ENCODE measurements at regions of chr18 and their contacts with region 1.

Region 1: GRCh38 chr18:7566567-7567473 is at the start of gene PTPRM:
- ATAC-seq: peak; percentile 79 to 91 (median 88)
- H3K4me3 ChIP-seq: peak within 1 kb of the TSS; percentile 49 to 77 (median 71)
- H3K27ac ChIP-seq: no peak within 1 kb of the TSS
- H3K4me1 ChIP-seq: peaks cover 2 to 7% of the 10 kb centered on the region in 2 donors
- total RNA-seq, gene PTPRM: 12.9 to 106 (median 66.9) TPM

Region 2: DNA sequence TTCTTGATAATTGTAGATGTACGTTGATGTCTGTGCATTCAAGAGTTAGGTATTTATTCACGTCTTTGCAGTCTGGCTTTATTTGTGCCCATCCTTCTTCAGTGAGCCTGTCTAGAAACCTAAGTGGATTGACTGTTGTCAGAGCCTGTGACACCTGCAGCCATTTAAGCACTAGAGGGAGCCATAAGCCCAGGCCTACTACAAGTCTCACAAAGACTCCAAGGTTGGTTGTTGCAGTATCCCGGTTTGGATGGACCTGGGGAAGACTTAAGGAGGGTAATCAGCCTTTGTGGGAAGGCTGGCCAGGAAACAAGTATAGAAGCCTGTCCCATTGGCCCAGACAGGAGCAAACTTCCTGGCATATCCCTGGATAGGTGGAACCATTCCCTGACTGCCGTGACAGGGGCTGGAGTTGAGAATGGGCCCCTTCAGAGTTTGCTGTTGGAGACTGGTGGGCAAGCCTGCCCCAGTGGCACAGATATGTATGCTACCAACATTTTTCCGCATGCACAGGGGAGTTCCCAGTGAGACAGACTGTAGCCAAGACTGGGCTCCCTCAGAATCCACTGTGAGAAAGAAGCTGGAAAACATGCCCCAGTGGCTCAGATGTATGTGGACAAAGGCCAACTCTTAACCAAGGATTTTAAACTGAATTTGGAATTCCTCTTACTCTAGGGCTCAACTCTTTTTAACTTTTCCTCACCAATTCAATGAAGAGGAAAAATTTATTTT is 345.2 kb before region 1 on chr18:
- in situ Hi-C with region 1: loop called in 1 of 9 experiments (anchors 25 kb)
- ATAC-seq: peak; percentile 78 to 100 (median 91)
- H3K4me3 ChIP-seq: no peak overlapping the region
- H3K27ac ChIP-seq: no peak overlapping the region
- H3K4me1 ChIP-seq: peaks cover 0 to 10% of the 10 kb centered on the region in 2 donors

Region 3: GRCh38 chr18:7259475-7260081 is 307.2 kb before region 1 on chr18:
- in situ Hi-C with region 1: loop called in 1 of 9 experiments (anchors 10 kb)
- ATAC-seq: peak in 1 of 8 experiments; percentile 23
- H3K4me3 ChIP-seq: no peak overlapping the region
- H3K27ac ChIP-seq: no peak overlapping the region
- H3K4me1 ChIP-seq: no peaks in the 10 kb centered on the region

Region 4: GRCh38 chr18:7291046-7291445 is 275.8 kb before region 1 on chr18:
- in situ Hi-C with region 1: loop called in 1 of 9 experiments (anchors 25 kb)
- ATAC-seq: no peak
- H3K4me3 ChIP-seq: no peak overlapping the region
- H3K27ac ChIP-seq: no peak overlapping the region
- H3K4me1 ChIP-seq: no peaks in the 10 kb centered on the region

Region 5: DNA sequence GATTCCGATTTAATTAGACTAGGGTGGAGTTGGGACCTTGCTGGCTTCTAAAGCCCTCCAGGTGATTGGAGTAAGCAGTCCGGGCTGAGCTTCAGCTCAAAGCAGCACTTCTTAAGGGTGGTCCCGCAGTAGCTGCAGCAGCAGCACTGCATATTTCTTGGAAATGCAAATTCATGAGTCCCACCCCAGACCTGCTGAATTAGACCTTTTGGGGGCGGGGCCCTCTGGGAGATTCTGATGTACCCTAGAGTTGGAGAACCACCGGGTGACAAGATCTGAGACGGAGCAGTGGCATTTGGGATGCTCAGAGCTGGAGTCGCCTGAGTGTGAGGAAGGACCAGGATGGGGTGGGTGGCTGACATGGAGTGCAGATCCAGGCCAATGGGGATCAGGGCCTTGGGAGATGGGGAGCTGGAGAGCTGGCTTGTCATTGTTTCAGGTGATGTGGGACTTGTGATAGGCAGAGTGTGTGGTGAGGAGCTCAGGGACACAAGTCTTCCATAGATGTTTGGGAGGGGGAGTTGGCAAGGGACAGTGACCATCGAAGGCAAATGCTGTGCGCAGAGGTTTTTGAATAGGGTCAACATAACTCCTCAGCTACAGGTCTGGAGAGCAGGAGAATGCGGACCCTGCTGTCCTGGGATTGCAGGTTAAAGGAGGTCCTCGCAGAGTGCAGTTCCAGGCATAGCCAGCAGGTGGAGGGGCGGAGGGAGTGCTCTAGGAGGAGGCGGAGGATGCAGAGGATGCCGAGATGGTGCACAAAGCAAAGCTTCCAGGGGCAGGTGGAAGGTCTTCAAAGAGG is 911.5 kb after region 1 on chr18:
- in situ Hi-C with region 1: loop called in 1 of 9 experiments (anchors 25 kb)
- ATAC-seq: peak in 4 of 8 experiments; percentile 52 to 89 (median 62)
- H3K4me3 ChIP-seq: no peak overlapping the region
- H3K27ac ChIP-seq: no peak overlapping the region
- H3K4me1 ChIP-seq: no peaks in the 10 kb centered on the region

Measured in motor neuron (in vitro differentiated cells).